ENCODE measurements at regions of chr1 and their contacts with region 1.

Region 1: GRCh38 chr1:212455803-212456528 is 23.2 kb downstream of the NENF start:
- DNase-seq: peak; percentile 91
- ATAC-seq: peak; percentile 77
- H3K4me3 Mint-ChIP-seq: no peak overlapping the region
- H3K27ac Mint-ChIP-seq: no peak overlapping the region
- H3K4me1 Mint-ChIP-seq: peaks cover 7% of the 10 kb centered on the region
- H3K27me3 Mint-ChIP-seq: no peaks in the 10 kb centered on the region

Region 2: GRCh38 chr1:210922666-210923065 is 1533.3 kb before region 1 on chr1:
- CTCF ChIA-PET with region 1: no interaction called
- POLR2A ChIA-PET with region 1: no interaction called
- intact Hi-C with region 1: no loop called
- DNase-seq: no peak
- ATAC-seq: no peak
- H3K4me3 Mint-ChIP-seq: no peak overlapping the region
- H3K27ac Mint-ChIP-seq: no peak overlapping the region
- H3K4me1 Mint-ChIP-seq: no peaks in the 10 kb centered on the region
- H3K27me3 Mint-ChIP-seq: peaks cover 17% of the 10 kb centered on the region

Region 3: DNA sequence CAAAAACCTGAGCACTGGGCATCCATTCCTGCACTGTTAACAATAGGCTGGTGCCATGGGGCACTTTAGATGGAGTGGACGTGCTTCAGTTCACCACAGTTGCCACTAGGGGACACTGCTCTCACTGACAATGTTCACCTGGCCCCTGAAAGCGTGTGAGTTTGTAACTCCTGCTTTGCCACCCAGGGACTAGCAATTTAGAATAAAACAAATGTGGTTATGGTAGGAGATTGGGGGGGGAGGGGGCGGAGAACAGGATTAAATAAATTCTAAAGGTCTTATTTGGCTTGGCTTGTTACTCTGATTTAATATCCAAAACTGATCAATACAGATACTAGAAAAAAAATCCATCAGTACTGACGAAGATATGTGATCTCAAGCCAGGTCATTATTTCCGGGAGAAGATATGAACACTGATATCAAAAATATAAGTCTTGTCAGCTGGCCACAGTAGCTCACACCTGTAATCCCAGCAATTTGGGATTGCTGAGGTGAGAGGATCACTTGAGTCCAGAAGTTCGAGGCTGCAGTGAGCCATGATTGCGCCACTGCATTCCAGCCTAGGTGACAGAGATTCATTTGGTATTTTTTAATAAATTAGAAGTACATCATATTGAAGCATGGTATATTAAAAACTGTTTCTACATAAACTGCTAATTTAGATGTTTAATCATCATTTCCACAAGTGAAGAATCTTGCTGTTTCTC is 443.8 kb before region 1 on chr1:
- CTCF ChIA-PET with region 1: interaction called, 10 read pairs
- POLR2A ChIA-PET with region 1: no interaction called
- intact Hi-C with region 1: loop called (anchors 1 to 5 kb)
- DNase-seq: peak; percentile 80
- ATAC-seq: peak; percentile 99
- H3K4me3 Mint-ChIP-seq: no peak overlapping the region
- H3K27ac Mint-ChIP-seq: no peak overlapping the region
- H3K4me1 Mint-ChIP-seq: no peaks in the 10 kb centered on the region
- H3K27me3 Mint-ChIP-seq: no peaks in the 10 kb centered on the region

Region 4: GRCh38 chr1:212269306-212269705 is 186.7 kb before region 1 on chr1:
- CTCF ChIA-PET with region 1: no interaction called
- POLR2A ChIA-PET with region 1: no interaction called
- intact Hi-C with region 1: no loop called
- DNase-seq: no peak
- ATAC-seq: no peak
- H3K4me3 Mint-ChIP-seq: no peak overlapping the region
- H3K27ac Mint-ChIP-seq: no peak overlapping the region
- H3K4me1 Mint-ChIP-seq: no peaks in the 10 kb centered on the region
- H3K27me3 Mint-ChIP-seq: peaks cover 2% of the 10 kb centered on the region

Region 5: GRCh38 chr1:212346601-212347000 is 109.4 kb before region 1 on chr1:
- CTCF ChIA-PET with region 1: interaction called, 13 read pairs
- POLR2A ChIA-PET with region 1: no interaction called
- intact Hi-C with region 1: no loop called
- DNase-seq: no peak
- ATAC-seq: no peak
- H3K4me3 Mint-ChIP-seq: no peak overlapping the region
- H3K27ac Mint-ChIP-seq: peak overlapping the region; percentile 10
- H3K4me1 Mint-ChIP-seq: peaks cover 3% of the 10 kb centered on the region
- H3K27me3 Mint-ChIP-seq: no peaks in the 10 kb centered on the region

Region 6: GRCh38 chr1:212414328-212415106 is 41.4 kb before region 1 on chr1 and contains the start of gene PACC1:
- CTCF ChIA-PET with region 1: interaction called, 7 read pairs
- POLR2A ChIA-PET with region 1: no interaction called
- intact Hi-C with region 1: loop called in 1 of 2 experiments (anchors 2 kb)
- DNase-seq: peak; percentile 93
- ATAC-seq: peak; percentile 98
- H3K4me3 Mint-ChIP-seq: peak within 1 kb of the TSS; percentile 93
- H3K27ac Mint-ChIP-seq: peak within 1 kb of the TSS; percentile 92
- H3K4me1 Mint-ChIP-seq: peaks cover 22% of the 10 kb centered on the region
- H3K27me3 Mint-ChIP-seq: no peaks in the 10 kb centered on the region
- total RNA-seq, gene PACC1: 9.2 to 13.8 TPM

Region 7: GRCh38 chr1:212477014-212477679 is 21.2 kb after region 1 on chr1:
- CTCF ChIA-PET with region 1: interaction called, 87 read pairs
- POLR2A ChIA-PET with region 1: no interaction called
- intact Hi-C with region 1: no loop called
- DNase-seq: peak; percentile 87
- ATAC-seq: peak; percentile 93
- H3K4me3 Mint-ChIP-seq: no peak overlapping the region
- H3K27ac Mint-ChIP-seq: no peak overlapping the region
- H3K4me1 Mint-ChIP-seq: peaks cover 11% of the 10 kb centered on the region
- H3K27me3 Mint-ChIP-seq: peaks cover 2% of the 10 kb centered on the region

Region 8: DNA sequence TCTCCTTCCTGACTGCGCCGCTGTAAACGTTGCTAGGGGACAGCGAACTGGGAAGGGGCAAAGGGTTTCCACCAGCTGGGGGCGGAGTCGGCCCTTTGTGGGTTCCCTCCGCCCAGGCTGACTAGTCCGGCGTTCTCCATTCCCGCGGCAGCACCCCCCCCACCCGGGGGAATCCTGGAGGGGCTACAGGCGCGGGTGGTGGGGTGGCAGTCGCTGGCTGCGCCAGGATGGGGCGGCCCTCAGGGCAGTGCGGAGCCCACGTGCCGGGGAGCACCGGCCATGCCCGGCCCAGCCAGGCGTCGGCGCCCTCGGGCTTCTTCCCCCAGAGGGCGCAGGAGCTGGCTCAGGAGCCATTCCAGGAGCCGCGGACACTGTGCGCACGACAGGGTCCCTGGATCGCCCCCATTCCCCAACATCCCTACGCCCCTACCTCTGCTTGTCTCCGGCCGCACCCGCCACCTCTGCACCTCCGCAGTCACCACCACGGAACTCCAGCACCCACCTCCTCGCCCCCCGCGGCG is 243.2 kb after region 1 on chr1:
- CTCF ChIA-PET with region 1: interaction called, 11 read pairs
- POLR2A ChIA-PET with region 1: no interaction called
- intact Hi-C with region 1: no loop called
- DNase-seq: peak; percentile 82
- ATAC-seq: peak; percentile 68
- H3K4me3 Mint-ChIP-seq: peak overlapping the region; percentile 77
- H3K27ac Mint-ChIP-seq: peak overlapping the region; percentile 88
- H3K4me1 Mint-ChIP-seq: peaks cover 57% of the 10 kb centered on the region
- H3K27me3 Mint-ChIP-seq: peaks cover 5% of the 10 kb centered on the region

Region 9: DNA sequence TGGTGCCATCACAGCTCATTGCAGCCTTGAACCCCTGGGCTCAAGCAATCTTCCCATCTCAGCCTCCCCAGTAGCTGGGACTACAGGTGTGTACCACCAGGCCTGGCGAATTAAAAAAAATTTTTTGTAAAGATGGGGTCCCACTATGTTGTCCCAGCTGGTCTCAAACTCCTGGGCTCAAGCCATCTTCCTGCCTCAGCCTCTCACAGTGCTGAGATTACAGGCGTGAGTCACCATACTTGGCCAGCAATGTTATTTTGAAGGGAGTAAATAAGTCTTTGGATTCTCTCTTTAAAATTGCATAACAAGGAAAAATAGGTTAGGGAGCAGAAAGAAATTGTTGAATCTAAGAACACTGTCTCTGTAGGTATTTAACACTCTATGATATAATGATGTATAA is 706.4 kb after region 1 on chr1:
- CTCF ChIA-PET with region 1: no interaction called
- POLR2A ChIA-PET with region 1: no interaction called
- intact Hi-C with region 1: no loop called
- DNase-seq: no peak
- ATAC-seq: no peak
- H3K4me3 Mint-ChIP-seq: no peak overlapping the region
- H3K27ac Mint-ChIP-seq: no peak overlapping the region
- H3K4me1 Mint-ChIP-seq: no peaks in the 10 kb centered on the region
- H3K27me3 Mint-ChIP-seq: no peaks in the 10 kb centered on the region